Posterior vena cava (tissue), 2 donors: ENCODE measurements at regions of chr12 and their contacts with region 1.

Region 1: DNA sequence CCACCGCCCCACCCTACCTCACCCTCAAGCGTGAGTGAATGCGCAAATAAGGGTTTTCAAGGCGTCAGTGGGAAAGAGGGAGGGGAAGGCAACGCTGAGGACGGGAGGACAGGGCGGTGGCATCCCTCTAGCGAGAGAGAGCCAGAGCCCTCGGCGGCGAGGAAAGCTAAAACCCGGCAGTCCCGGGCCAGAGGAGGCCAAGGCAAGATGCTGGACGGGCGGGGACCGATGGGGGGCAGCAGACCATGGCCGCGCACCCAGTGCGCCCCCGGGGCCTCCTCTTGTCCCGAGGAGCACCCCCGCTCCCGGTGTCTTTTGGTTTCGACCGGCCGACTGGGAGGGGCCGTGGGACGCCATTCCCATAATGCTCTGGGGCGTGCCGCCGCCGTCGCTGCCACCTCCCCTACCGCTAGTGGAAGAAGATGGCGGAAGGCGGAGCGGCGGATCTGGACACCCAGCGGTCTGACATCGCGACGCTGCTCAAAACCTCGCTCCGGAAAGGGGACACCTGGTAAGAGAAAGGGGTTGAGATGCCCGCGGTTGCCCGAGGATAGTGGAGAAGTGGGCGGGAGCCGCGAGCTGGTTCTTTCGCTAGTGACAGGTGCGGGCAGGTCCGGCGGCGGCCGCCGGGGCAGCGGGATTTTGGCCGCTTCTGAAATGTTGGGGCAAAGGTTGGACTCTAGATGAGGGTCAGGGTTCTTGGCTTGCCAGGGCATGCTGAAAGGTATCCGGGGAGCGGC is at the start of gene USP15:
- DNase-seq: peak; percentile 99
- total RNA-seq, gene USP15: 75.9 to 79.7 TPM

Region 2: GRCh38 chr12:62351326-62351725 is 91.2 kb after region 1 on chr12:
- intact Hi-C with region 1: loop called in 1 of 2 experiments (anchors 10 kb)
- DNase-seq: no peak